ENCODE measurements at regions of chr16 and their contacts with region 1.

Region 1: GRCh38 chr16:30761928-30762810 is at the starts of genes CFAP119 and RNF40:
- DNase-seq: peak; percentile 73 to 97 (median 88)
- ATAC-seq: peak; percentile 96
- H3K4me3 ChIP-seq: peak within 1 kb of the TSS; percentile 99
- H3K4me3 Mint-ChIP-seq: peak within 1 kb of the TSS; percentile 96 to 98 (median 97)
- H3K27ac ChIP-seq: peak within 1 kb of the TSS; percentile 88
- H3K27ac Mint-ChIP-seq: peak within 1 kb of the TSS; percentile 82 to 96 (median 93)
- H3K4me1 ChIP-seq: peaks cover 17 to 31% of the 10 kb centered on the region in 2 donors
- H3K4me1 Mint-ChIP-seq: peaks cover 21 to 41% (median 32%) of the 10 kb centered on the region in 7 donors
- H3K27me3 ChIP-seq: no peaks in the 10 kb centered on the region
- H3K27me3 Mint-ChIP-seq: no peaks in the 10 kb centered on the region
- total RNA-seq, gene CFAP119: 2.3 to 5.9 (median 2.9) TPM
- total RNA-seq, gene RNF40: 68.7 to 122 (median 114) TPM

Region 2: GRCh38 chr16:30571695-30572600 is 190.2 kb before region 1 on chr16 and contains the start of gene ZNF688:
- CTCF ChIA-PET with region 1: no interaction called
- POLR2A ChIA-PET with region 1: no interaction called
- intact Hi-C with region 1: no loop called
- DNase-seq: peak; percentile 74 to 99 (median 97)
- ATAC-seq: peak; percentile 89
- H3K4me3 ChIP-seq: peak within 1 kb of the TSS; percentile 88
- H3K4me3 Mint-ChIP-seq: peak within 1 kb of the TSS; percentile 87 to 98 (median 90)
- H3K27ac ChIP-seq: peak within 1 kb of the TSS; percentile 94
- H3K27ac Mint-ChIP-seq: peak within 1 kb of the TSS; percentile 92 to 98 (median 95)
- H3K4me1 ChIP-seq: peaks cover 36 to 38% of the 10 kb centered on the region in 2 donors
- H3K4me1 Mint-ChIP-seq: peaks cover 17 to 51% (median 39%) of the 10 kb centered on the region in 7 donors
- H3K27me3 ChIP-seq: no peaks in the 10 kb centered on the region
- H3K27me3 Mint-ChIP-seq: no peaks in the 10 kb centered on the region
- total RNA-seq, gene ZNF688: 8.8 to 24.3 (median 16.3) TPM

Region 3: DNA sequence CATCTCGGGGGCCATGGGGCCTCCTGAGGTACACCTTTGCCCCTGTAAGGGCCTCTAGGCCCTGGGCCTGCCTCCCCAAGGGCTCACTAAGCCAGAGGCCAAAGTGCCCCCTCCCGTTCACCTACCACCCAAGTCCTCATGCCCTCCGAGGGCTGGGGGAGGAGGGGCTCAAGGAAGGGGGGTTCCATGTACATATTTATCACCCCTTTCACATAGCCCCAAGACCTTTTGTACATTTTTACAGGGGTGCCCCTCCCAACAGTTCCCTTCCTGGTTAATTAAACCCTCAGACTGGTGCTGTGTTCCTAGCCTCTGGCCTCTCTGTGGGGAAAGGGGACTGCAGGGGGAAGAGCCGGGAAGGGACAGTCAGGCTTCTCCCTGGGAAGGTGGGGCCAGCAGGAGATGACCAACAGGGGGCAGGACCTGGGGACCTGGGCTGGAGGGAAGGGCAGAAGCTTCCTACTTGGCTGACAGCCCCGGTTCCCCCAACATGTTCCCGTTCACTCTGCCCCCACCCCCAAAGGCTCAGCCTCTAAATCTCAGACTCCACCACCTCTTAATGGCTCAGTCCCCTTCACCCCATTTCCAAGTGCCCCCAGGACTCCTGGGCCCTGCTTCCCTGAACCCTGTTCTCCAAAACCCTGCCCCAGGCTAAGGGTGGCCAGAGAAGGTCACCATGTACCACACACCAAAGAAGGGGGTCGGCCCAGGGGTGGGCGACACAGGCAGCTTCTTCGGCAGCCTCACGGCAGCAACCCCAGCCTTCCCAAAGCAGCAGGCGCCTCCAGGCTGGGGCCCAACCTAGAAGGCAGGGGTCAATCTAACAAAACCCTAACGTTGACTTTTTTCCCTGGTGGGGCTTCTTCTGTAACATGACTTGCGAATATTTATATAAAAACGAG is 92.0 kb before region 1 on chr16:
- CTCF ChIA-PET with region 1: no interaction called
- POLR2A ChIA-PET with region 1: no interaction called
- intact Hi-C with region 1: no loop called
- DNase-seq: no peak
- ATAC-seq: peak; percentile 6
- H3K4me3 ChIP-seq: no peak overlapping the region
- H3K4me3 Mint-ChIP-seq: no peak overlapping the region
- H3K27ac ChIP-seq: no peak overlapping the region
- H3K27ac Mint-ChIP-seq: no peak overlapping the region
- H3K4me1 ChIP-seq: peaks cover 0 to 3% of the 10 kb centered on the region in 2 donors
- H3K4me1 Mint-ChIP-seq: peaks cover 0 to 10% (median 4%) of the 10 kb centered on the region in 7 donors
- H3K27me3 ChIP-seq: no peaks in the 10 kb centered on the region
- H3K27me3 Mint-ChIP-seq: no peaks in the 10 kb centered on the region

Region 4: GRCh38 chr16:30747799-30748634 is 14.2 kb before region 1 on chr16 and contains the start of gene PHKG2:
- CTCF ChIA-PET with region 1: no interaction called
- POLR2A ChIA-PET with region 1: interaction called, 17 read pairs
- intact Hi-C with region 1: loop called (anchors 1 kb)
- DNase-seq: peak; percentile 82 to 95 (median 92)
- ATAC-seq: peak; percentile 99
- H3K4me3 ChIP-seq: peak within 1 kb of the TSS; percentile 51
- H3K4me3 Mint-ChIP-seq: peak within 1 kb of the TSS; percentile 78 to 98 (median 90)
- H3K27ac ChIP-seq: peak within 1 kb of the TSS; percentile 75
- H3K27ac Mint-ChIP-seq: peak within 1 kb of the TSS; percentile 82 to 95 (median 90)
- H3K4me1 ChIP-seq: peaks cover 4 to 6% of the 10 kb centered on the region in 2 donors
- H3K4me1 Mint-ChIP-seq: peaks cover 18 to 29% (median 27%) of the 10 kb centered on the region in 7 donors
- H3K27me3 ChIP-seq: no peaks in the 10 kb centered on the region
- H3K27me3 Mint-ChIP-seq: no peaks in the 10 kb centered on the region
- total RNA-seq, gene PHKG2: 33.2 to 57.8 (median 46.7) TPM

Region 5: DNA sequence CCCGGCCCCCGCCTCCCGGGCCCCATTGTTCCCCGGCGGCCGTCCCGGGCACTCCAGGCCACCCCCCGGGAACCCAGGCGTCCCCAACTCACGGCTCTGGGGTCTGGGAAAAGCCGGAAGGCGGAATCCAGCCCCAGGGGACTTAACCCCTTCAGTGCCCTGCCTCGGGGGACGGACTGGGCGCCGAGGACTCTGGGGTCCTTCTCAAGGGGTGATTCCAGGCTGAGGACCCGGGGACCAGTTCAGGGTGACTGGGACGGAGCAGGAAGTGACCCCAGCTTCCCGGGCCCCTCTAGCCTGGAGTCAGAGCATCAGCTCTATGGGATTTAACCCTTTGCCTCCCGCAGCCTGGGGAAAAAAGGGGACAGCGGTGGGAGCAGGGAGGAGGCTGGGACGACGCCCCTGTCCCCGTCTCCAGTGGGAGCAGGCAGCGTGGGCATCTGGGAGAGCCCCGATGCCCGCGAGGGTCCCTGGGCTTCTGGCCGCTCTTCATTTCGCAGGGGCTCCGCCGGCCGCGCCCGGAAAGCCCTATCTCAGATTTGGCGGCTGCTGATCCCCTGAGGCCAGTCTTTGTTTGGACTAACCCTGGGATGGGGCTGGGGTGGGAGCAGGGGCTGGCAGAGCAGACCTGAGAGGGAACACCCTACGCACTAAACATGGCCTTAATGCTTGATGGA is 24.9 kb after region 1 on chr16 and contains the start of gene ZNF629:
- CTCF ChIA-PET with region 1: no interaction called
- POLR2A ChIA-PET with region 1: interaction called, 3 read pairs
- intact Hi-C with region 1: loop called in 1 of 2 experiments (anchors 2 kb)
- DNase-seq: peak in 5 of 9 donors; percentile 32 to 42 (median 33)
- ATAC-seq: peak; percentile 70
- H3K4me3 ChIP-seq: peak within 1 kb of the TSS; percentile 60
- H3K4me3 Mint-ChIP-seq: peak within 1 kb of the TSS; percentile 74 to 94 (median 88)
- H3K27ac ChIP-seq: peak within 1 kb of the TSS; percentile 68
- H3K27ac Mint-ChIP-seq: peak within 1 kb of the TSS in 8 of 9 donors; percentile 8 to 85 (median 50)
- H3K4me1 ChIP-seq: peaks cover 7% of the 10 kb centered on the region in 2 donors
- H3K4me1 Mint-ChIP-seq: peaks cover 0 to 25% (median 22%) of the 10 kb centered on the region in 7 donors
- H3K27me3 ChIP-seq: peaks cover 0 to 7% of the 10 kb centered on the region in 2 donors
- H3K27me3 Mint-ChIP-seq: peaks cover 0 to 43% (median 0%) of the 10 kb centered on the region in 5 donors
- total RNA-seq, gene ZNF629: 2.4 to 11.1 (median 4.2) TPM

Region 6: DNA sequence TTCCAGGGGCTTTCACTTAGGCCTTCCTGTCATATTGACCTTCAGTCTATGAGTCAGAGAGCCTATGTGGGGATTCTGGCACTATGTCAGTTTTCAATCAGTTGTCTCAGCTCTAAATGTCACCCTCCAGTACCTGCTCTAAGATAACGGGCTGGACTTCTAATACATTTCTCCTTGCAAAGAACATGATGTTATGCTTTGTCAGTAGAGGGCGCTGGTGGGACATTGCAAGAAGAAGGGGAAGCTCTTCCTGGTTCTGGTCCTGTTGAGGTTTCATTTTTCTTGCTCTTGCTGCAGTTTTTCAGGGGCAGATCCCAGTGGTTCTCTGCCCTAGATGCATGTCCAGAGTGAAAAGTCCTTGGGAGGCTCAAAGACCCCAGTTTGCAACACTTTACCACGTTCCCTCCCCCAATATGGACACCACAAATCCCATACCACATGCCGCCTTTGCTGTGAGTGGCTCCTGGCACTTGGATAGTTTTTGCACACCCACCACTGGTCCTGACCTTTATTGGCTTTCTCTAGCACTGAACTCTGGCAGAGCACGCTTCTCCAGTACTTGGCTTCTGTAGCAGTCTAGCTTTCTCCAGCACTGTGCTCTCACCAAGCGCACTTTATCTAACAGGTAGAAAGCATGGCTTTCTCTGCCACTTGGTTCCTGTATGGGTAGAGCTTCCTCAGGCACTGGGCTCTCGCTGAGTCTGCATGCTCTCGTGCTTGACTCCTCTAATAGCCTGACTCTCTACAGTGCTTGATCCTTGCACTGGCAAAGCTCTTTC is 82.7 kb after region 1 on chr16:
- CTCF ChIA-PET with region 1: no interaction called
- POLR2A ChIA-PET with region 1: no interaction called
- intact Hi-C with region 1: loop called in 1 of 2 experiments (anchors 1 kb)
- DNase-seq: peak; percentile 50 to 89 (median 83)
- ATAC-seq: peak; percentile 97
- H3K4me3 ChIP-seq: no peak overlapping the region
- H3K4me3 Mint-ChIP-seq: peak overlapping the region in 9 of 10 donors; percentile 22 to 67 (median 64)
- H3K27ac ChIP-seq: peak overlapping the region; percentile 1
- H3K27ac Mint-ChIP-seq: peak overlapping the region; percentile 2 to 82 (median 73)
- H3K4me1 ChIP-seq: peaks cover 0 to 5% of the 10 kb centered on the region in 2 donors
- H3K4me1 Mint-ChIP-seq: peaks cover 6 to 14% (median 8%) of the 10 kb centered on the region in 7 donors
- H3K27me3 ChIP-seq: no peaks in the 10 kb centered on the region
- H3K27me3 Mint-ChIP-seq: no peaks in the 10 kb centered on the region

Region 7: GRCh38 chr16:30902029-30902972 is 140.1 kb after region 1 on chr16:
- CTCF ChIA-PET with region 1: no interaction called
- POLR2A ChIA-PET with region 1: no interaction called
- intact Hi-C with region 1: loop called (anchors 5 kb)
- DNase-seq: peak in 8 of 9 donors; percentile 38 to 76 (median 61)
- ATAC-seq: peak; percentile 92
- H3K4me3 ChIP-seq: peak overlapping the region; percentile 65
- H3K4me3 Mint-ChIP-seq: peak overlapping the region; percentile 91 to 99 (median 96)
- H3K27ac ChIP-seq: peak overlapping the region; percentile 80
- H3K27ac Mint-ChIP-seq: peak overlapping the region; percentile 90 to 99 (median 98)
- H3K4me1 ChIP-seq: peaks cover 26 to 35% of the 10 kb centered on the region in 2 donors
- H3K4me1 Mint-ChIP-seq: peaks cover 18 to 43% (median 32%) of the 10 kb centered on the region in 7 donors
- H3K27me3 ChIP-seq: no peaks in the 10 kb centered on the region
- H3K27me3 Mint-ChIP-seq: no peaks in the 10 kb centered on the region